ENCODE measurements at regions of chr19 and their contacts with region 1.

Region 1: GRCh38 chr19:23686621-23687423 is at the start of gene ZNF675:
- DNase-seq: peak; percentile 92 to 94
- ATAC-seq: peak; percentile 86 to 97 (median 94)
- H3K4me3 ChIP-seq: peak within 1 kb of the TSS; percentile 79
- H3K27ac ChIP-seq: peak within 1 kb of the TSS; percentile 63
- H3K4me1 ChIP-seq: no peaks in the 10 kb centered on the region
- H3K27me3 ChIP-seq: no peaks in the 10 kb centered on the region
- CTCF ChIP-seq: no peak
- total RNA-seq, gene ZNF675: 0.86 to 2.0 (median 1.4) TPM

Region 2: GRCh38 chr19:24033301-24033962 is 346.6 kb after region 1 on chr19:
- intact Hi-C with region 1: loop called in 1 of 2 experiments (anchors 10 kb)
- DNase-seq: peak; percentile 89 to 91
- ATAC-seq: peak; percentile 90 to 98 (median 96)
- H3K4me3 ChIP-seq: peak overlapping the region; percentile 84
- H3K27ac ChIP-seq: peak overlapping the region; percentile 82
- H3K4me1 ChIP-seq: peaks cover 8% of the 10 kb centered on the region
- H3K27me3 ChIP-seq: no peaks in the 10 kb centered on the region
- CTCF ChIP-seq: no peak

Measured in psoas muscle (tissue), 8 donors.